Activated naive CD4-positive, alpha-beta T cell treated with anti-CD3 and anti-CD28 coated beads for 36 hours (primary cell): ENCODE measurements at regions of chr19 and their contacts with region 1.

Region 1: DNA sequence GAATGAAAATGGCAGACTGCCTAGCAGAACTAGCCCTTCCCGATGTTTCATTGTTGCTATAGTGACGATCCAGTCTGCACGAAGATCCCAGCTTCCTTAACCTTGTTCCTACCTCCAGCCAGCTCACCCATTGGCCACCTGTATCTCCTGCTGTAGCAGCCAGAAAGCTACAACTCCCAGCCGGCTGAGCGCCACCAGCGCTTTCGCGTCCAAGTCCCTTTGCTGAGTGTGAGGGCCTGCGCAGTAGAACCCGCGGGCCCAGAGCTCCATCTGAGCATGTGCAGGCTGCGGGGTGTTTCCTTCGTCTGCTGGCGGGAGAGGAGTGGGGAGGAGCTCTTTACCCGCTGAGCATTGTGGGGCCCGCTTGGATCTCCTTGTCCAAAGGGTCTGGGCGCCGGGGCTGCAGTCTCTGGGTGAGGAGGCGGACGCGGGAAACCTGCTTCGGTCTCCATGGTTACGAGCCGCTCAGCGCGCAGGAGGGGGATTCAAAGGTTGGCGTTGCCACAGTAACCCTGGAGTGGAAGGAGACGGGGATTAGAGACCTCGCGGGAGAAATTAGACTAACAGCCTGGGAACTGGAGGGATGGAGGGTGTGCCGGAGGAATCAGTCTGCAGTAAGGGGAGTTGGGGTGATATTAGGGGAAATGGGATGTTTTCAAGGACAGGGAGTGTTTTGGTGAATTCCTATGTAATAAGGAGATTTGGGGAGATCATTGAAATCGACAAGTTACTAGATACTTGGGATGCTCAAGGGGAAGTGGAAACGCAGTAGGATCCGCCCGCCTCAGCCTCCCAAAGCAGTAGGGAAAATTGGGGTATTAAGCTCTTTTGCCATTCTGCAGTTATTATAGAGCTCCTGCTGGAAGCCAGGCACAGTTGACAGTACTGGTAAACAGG is 33.5 kb downstream of the ZSWIM9 start:
- DNase-seq: peak; percentile 96
- H3K4me3 Mint-ChIP-seq: no peak overlapping the region
- H3K27ac Mint-ChIP-seq: no peak overlapping the region
- H3K4me1 Mint-ChIP-seq: peaks cover 21% of the 10 kb centered on the region
- H3K27me3 Mint-ChIP-seq: no peaks in the 10 kb centered on the region

Region 2: DNA sequence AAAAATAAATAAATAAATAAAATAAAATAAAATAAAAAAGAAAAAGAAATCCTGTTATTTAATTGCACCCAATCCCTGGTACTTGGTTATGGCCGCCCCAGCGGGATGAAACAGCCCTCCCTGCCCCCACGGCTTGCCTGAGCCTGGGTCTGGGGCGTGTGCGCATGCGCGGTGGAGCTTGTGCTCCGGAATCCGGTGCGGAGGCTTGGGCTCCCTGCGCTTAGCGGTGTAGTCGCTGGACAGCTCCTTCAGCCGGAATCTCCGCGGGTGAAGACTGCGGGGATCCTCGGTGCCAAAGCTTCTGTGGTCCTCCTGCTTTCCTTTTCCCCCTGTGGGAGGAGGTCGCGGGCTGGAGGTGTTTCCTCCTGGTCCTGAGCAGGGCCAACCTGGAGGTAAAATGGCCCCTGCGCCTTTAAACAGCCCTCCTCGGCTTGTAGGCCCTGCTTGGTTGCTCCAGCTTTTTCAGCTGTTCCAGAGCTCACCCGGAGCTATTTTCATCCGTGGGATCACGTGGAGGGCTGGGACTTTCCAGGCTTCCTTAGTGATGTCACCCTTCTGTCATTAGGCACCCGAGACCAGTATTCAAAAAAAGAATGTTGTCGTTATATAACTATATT is 93.5 kb before region 1 on chr19 and contains the start of gene PLA2G4C:
- CTCF ChIA-PET with region 1: interaction called, 12 read pairs
- intact Hi-C with region 1: no loop called
- DNase-seq: peak; percentile 89
- H3K4me3 Mint-ChIP-seq: peak within 1 kb of the TSS; percentile 85
- H3K27ac Mint-ChIP-seq: peak within 1 kb of the TSS; percentile 93
- H3K4me1 Mint-ChIP-seq: peaks cover 11% of the 10 kb centered on the region
- H3K27me3 Mint-ChIP-seq: no peaks in the 10 kb centered on the region
- total RNA-seq, gene PLA2G4C: 8.8 to 9.6 TPM

Region 3: DNA sequence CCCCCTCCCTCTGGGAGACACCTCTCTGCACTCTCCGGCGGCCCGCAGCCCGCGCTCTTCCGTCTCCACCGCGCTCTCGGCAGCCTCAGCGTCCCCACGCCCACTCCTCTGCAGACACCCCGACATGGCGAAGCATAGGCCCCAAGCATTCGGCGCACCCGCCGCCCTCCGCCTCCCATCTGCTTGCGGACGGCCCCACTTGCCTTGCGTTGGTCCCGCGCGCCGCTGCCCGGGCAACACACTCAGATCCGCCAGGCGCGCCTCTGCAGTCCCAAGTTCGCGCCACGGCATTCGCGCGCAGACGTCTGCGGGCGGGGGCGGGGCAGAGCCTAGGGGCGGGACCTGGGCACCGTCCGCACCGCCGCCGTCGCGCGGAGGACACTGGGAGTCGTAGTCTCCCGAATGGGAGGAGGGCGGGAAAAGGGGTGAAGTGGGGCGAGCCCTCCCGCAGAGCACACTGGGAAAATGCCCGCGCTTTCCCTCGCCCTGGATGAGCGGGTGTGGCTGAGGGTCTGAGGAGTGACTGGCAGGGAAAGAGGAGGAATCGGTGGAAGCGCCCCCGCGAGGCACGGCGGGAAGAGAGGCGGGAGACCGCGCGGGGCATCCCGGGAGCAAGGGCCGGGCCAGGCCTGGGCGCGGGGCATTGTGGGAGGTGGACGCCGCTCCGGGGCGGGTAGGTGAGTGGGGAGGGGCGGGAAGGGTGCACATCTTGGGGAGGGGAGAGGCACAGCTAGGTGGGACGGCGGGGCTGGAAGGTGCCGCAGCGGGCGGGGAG is 33.8 kb before region 1 on chr19 and contains the starts of genes LIG1 and ZSWIM9:
- CTCF ChIA-PET with region 1: no interaction called
- intact Hi-C with region 1: loop called (anchors 1 kb)
- DNase-seq: peak; percentile 93
- H3K4me3 Mint-ChIP-seq: peak within 1 kb of the TSS; percentile 90
- H3K27ac Mint-ChIP-seq: peak within 1 kb of the TSS; percentile 97
- H3K4me1 Mint-ChIP-seq: peaks cover 30% of the 10 kb centered on the region
- H3K27me3 Mint-ChIP-seq: no peaks in the 10 kb centered on the region
- total RNA-seq, gene LIG1: 187 to 195 TPM
- total RNA-seq, gene ZSWIM9: 6.1 to 6.7 TPM

Region 4: GRCh38 chr19:48190288-48190884 is 13.6 kb before region 1 on chr19:
- CTCF ChIA-PET with region 1: interaction called, 18 read pairs
- intact Hi-C with region 1: no loop called
- DNase-seq: peak; percentile 65
- H3K4me3 Mint-ChIP-seq: no peak overlapping the region
- H3K27ac Mint-ChIP-seq: no peak overlapping the region
- H3K4me1 Mint-ChIP-seq: peaks cover 4% of the 10 kb centered on the region
- H3K27me3 Mint-ChIP-seq: no peaks in the 10 kb centered on the region

Region 5: GRCh38 chr19:48249502-48250014 is 45.6 kb after region 1 on chr19:
- CTCF ChIA-PET with region 1: interaction called, 3 read pairs
- intact Hi-C with region 1: loop called (anchors 1 kb)
- DNase-seq: peak; percentile 88
- H3K4me3 Mint-ChIP-seq: peak overlapping the region; percentile 89
- H3K27ac Mint-ChIP-seq: peak overlapping the region; percentile 98
- H3K4me1 Mint-ChIP-seq: peaks cover 74% of the 10 kb centered on the region
- H3K27me3 Mint-ChIP-seq: no peaks in the 10 kb centered on the region